CD14-positive monocyte (primary cell): ENCODE measurements at regions of chr11 and their contacts with region 1.

Region 1: GRCh38 chr11:128757235-128757711 is 63.4 kb downstream of the FLI1 start:
- DNase-seq: peak; percentile 84 to 92 (median 92)
- H3K4me3 ChIP-seq: no peak overlapping the region
- H3K4me3 Mint-ChIP-seq: no peak overlapping the region
- H3K27ac ChIP-seq: peak overlapping the region; percentile 12 to 73
- H3K27ac Mint-ChIP-seq: peak overlapping the region; percentile 86 to 96 (median 90)
- H3K4me1 ChIP-seq: peaks cover 21 to 31% of the 10 kb centered on the region in 2 donors
- H3K4me1 Mint-ChIP-seq: peaks cover 46% of the 10 kb centered on the region
- H3K27me3 ChIP-seq: no peaks in the 10 kb centered on the region
- H3K27me3 Mint-ChIP-seq: peaks cover 0 to 2% (median 0%) of the 10 kb centered on the region in 3 donors
- CTCF ChIP-seq: peak; percentile 83

Region 2: GRCh38 chr11:128290106-128290840 is 467.0 kb before region 1 on chr11:
- intact Hi-C with region 1: loop called (anchors 5 to 10 kb)
- DNase-seq: peak; percentile 52 to 66 (median 61)
- H3K4me3 ChIP-seq: no peak overlapping the region
- H3K4me3 Mint-ChIP-seq: peak overlapping the region; percentile 47 to 74
- H3K27ac ChIP-seq: no peak overlapping the region
- H3K27ac Mint-ChIP-seq: peak overlapping the region in 3 of 7 donors; percentile 5 to 77 (median 54)
- H3K4me1 ChIP-seq: peaks cover 0 to 3% of the 10 kb centered on the region in 2 donors
- H3K4me1 Mint-ChIP-seq: peaks cover 6% of the 10 kb centered on the region
- H3K27me3 ChIP-seq: no peaks in the 10 kb centered on the region
- H3K27me3 Mint-ChIP-seq: peaks cover 0 to 4% (median 2%) of the 10 kb centered on the region in 3 donors
- CTCF ChIP-seq: peak; percentile 84

Region 3: DNA sequence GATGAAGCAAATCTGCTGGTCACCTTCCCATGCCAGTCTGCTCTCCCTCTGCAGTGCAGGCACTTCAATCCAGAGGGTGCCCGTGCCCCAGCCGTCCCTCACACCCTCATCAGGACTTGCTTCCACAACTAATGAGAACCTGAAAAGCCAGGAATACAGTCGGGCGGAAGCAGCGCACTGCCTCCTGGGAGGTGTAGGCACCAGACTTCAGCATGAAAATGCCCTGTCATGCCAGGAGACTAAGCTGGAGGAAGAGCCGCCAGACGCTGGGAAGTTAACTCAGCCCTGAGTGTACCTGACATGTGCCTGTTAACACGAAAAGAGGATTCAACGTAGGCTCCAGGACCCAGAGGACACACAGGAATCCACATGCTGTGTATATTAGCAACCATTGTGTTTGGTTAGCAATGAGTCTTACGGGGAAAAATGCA is 103.5 kb before region 1 on chr11:
- intact Hi-C with region 1: loop called in 1 of 2 experiments (anchors 5 kb)
- DNase-seq: peak in 2 of 3 donors; percentile 57 to 61
- H3K4me3 ChIP-seq: peak overlapping the region; percentile 23 to 73 (median 51)
- H3K4me3 Mint-ChIP-seq: peak overlapping the region; percentile 81 to 93
- H3K27ac ChIP-seq: peak overlapping the region; percentile 0 to 59
- H3K27ac Mint-ChIP-seq: peak overlapping the region; percentile 15 to 85 (median 69)
- H3K4me1 ChIP-seq: peaks cover 18 to 24% of the 10 kb centered on the region in 2 donors
- H3K4me1 Mint-ChIP-seq: peaks cover 24% of the 10 kb centered on the region
- H3K27me3 ChIP-seq: no peaks in the 10 kb centered on the region
- H3K27me3 Mint-ChIP-seq: peaks cover 0 to 4% (median 3%) of the 10 kb centered on the region in 3 donors
- CTCF ChIP-seq: no peak

Region 4: DNA sequence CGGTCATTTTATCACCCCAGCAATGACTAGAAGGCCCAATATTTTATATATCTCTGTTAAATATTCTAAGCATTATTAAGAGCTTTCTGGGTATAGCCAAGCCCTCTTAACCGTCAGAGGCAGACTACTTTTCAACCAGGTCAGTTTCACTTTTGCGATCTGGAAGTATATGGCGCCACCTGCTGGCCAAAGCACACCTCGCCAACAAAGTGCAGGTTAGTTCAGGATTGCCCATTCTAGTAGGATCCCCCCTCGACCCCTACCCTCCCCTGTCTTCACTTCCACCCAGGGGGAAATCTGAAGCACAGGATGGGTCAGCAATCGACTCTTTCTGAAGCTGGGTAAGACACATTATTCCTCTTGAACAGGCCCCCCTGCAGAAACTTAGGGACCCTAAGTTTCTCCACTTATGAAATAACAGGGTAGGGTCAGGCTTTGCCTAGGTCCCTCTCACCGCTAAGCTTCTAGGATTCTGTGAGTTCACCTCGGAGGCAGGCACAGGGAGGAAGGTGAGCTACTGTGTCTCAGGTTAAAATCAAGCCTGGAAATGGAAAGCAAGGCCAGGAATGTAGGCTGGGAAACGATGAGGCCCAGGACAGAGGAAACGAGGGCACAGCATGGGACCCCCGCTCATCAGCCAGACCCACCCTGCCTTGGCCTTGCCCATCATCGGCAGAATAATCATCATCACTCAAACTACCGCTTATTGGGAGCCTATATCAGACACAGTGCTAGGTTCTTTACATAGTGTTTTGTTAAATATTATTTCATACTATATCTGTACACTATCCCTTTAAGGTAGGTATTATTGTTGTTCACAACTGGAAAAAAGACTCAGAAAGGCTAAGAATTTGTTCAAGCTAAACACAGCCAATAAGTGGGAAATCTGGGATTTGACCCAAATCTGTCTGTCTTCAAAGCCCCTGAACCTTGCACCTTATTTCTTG is 74.2 kb after region 1 on chr11:
- intact Hi-C with region 1: no loop called
- DNase-seq: peak; percentile 65 to 74 (median 72)
- H3K4me3 ChIP-seq: peak overlapping the region; percentile 42 to 80 (median 66)
- H3K4me3 Mint-ChIP-seq: peak overlapping the region; percentile 69 to 72
- H3K27ac ChIP-seq: peak overlapping the region in 1 of 2 donors; percentile 5
- H3K27ac Mint-ChIP-seq: peak overlapping the region in 1 of 7 donors; percentile 56
- H3K4me1 ChIP-seq: peaks cover 16 to 17% of the 10 kb centered on the region in 2 donors
- H3K4me1 Mint-ChIP-seq: peaks cover 49% of the 10 kb centered on the region
- H3K27me3 ChIP-seq: no peaks in the 10 kb centered on the region
- H3K27me3 Mint-ChIP-seq: peaks cover 0 to 2% (median 0%) of the 10 kb centered on the region in 3 donors
- CTCF ChIP-seq: peak; percentile 94